ENCODE measurements at regions of chr3 and their contacts with region 1.

Region 1: DNA sequence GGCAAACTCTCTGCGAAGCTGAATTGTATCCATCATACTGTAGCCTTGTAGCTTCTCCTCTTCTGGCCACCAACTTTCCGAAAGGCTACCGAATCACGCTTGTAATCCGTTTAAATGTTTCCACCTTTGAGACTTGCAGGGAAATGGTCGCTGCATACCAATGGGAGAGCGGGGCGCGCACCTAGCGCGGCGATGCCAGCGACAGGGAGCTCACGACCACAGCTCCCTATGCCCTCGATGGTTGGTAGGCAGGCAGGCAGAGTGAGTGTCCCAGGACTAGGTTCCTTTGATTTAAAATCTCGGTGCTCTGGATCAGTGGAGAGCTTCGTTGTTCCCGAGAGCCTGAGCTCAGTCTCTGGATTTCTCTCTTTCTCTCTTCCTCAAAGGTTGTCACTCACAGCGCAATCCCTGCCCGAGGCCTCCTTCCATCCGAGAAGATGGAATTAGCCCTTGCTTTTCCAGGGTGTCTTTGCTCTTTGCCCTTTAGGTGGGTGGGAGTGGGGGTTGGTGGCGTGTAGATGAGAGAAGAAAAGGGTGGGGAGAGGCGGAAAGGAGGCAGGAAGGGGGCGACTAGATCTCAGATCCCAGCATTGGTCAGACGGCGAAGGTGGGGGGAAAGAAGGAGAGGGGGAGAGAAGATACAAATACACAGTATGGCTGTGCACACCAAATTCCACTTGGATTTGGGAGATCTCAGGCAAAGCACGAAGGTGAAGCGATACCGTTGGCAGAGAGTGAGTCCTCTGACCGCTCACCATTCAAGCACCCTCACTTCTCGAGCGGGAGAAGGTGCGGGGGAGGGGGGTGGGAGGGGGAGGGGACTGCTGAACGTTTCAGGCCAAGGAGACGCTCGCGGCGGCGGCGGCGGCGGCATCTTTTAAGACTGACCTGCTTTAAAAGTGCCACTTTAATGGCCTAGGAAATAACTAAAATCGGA is at the start of gene SLITRK3:
- DNase-seq: no peak
- H3K4me3 Mint-ChIP-seq: peak within 1 kb of the TSS; percentile 18
- H3K27ac Mint-ChIP-seq: no peak within 1 kb of the TSS
- H3K4me1 Mint-ChIP-seq: peaks cover 24% of the 10 kb centered on the region
- H3K27me3 Mint-ChIP-seq: peaks cover 62% of the 10 kb centered on the region
- total RNA-seq, gene SLITRK3: not detected

Region 2: GRCh38 chr3:165206454-165207266 is 10.8 kb after region 1 on chr3:
- CTCF ChIA-PET with region 1: interaction called, 11 read pairs
- intact Hi-C with region 1: no loop called
- DNase-seq: peak; percentile 40
- H3K4me3 Mint-ChIP-seq: no peak overlapping the region
- H3K27ac Mint-ChIP-seq: no peak overlapping the region
- H3K4me1 Mint-ChIP-seq: peaks cover 2% of the 10 kb centered on the region
- H3K27me3 Mint-ChIP-seq: peaks cover 17% of the 10 kb centered on the region

Measured in activated naive CD4-positive, alpha-beta T cell treated with anti-CD3 and anti-CD28 coated beads for 36 hours (primary cell).